Body of pancreas (tissue), 4 donors: ENCODE measurements at regions of chr6 and their contacts with region 1.

Region 1: DNA sequence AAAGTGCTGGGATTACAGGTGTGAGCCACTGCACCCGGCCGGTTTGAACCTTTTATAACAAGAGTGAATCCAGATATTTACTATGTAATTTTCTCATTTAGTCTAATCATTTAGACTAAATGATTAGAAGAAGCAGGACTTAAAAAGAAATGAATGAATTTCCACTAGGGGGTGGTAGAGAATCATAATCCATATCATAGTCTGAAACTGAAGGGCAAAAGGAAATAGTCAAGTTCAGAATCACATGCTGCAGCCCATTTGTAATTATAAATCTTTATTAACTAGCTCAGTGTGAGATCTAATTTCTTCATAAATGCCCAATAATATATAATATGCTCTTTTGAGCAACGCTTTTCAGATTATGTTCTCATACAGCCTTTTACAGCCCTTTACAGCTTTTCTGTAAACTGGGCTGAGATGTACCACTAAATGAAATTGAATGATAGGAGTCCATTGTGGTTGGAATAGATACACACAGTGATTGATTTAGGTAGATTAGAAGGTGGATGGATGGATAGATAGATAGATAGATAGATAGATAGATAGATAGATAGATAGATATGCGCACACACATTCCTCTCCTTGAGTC is 31.8 kb downstream of the PSMB9 start:
- DNase-seq: no peak
- ATAC-seq: peak; percentile 79
- H3K4me3 ChIP-seq: no peak overlapping the region
- H3K27ac ChIP-seq: no peak overlapping the region
- H3K4me1 ChIP-seq: peaks cover 9% of the 10 kb centered on the region
- H3K27me3 ChIP-seq: no peaks in the 10 kb centered on the region
- CTCF ChIP-seq: peak; percentile 28 to 88 (median 76)
- POLR2A ChIP-seq: no peak

Region 2: DNA sequence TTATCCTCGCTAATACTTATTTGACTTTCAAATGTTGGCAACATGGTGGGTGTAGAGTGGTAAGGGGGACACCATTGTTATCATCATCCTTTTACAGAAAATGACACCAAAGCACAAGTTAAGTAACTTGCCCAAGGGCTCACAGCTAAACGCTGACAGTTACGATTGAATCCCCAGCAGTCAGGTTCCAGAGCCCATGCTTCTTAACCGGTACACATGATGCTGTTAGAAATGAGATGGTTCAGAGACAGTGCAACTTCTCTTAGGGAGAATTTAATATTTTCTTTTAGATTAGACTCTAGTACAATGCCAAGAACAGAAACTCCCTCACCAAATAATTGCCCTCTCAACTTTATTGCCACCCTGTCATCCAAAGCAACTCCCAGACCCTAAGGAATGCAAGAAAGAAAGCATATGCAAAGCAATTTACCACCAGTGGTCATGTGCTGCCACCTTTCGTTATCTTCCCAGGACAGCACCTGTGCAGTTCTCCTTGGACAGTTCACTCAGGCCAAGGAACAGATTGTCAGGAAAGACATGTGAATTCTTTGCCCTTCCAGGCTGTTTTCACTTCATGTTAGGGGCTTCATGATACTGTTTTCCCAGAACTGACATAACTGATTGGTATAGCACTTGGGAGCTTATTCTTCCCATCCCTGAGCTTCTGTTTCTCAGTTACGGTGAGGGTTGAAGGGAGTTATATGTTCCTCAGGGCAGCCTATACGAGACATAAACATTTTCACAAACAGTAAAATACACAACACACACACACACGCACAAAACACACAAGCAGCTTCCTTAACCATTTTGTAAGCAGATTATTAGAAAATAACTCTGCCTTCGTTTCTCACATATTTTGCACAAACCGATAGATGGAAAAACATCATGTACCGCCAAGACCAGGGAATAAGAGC is 62.0 kb after region 1 on chr6:
- intact Hi-C with region 1: loop called (anchors 5 kb)
- DNase-seq: peak; percentile 61 to 76 (median 70)
- ATAC-seq: peak; percentile 80
- H3K4me3 ChIP-seq: no peak overlapping the region
- H3K27ac ChIP-seq: no peak overlapping the region
- H3K4me1 ChIP-seq: peaks cover 4% of the 10 kb centered on the region
- H3K27me3 ChIP-seq: no peaks in the 10 kb centered on the region
- CTCF ChIP-seq: peak; percentile 59 to 91 (median 83)
- POLR2A ChIP-seq: no peak

Region 3: GRCh38 chr6:32984605-32985389 is 99.0 kb after region 1 on chr6:
- intact Hi-C with region 1: loop called (anchors 10 kb)
- DNase-seq: peak; percentile 96 to 98 (median 97)
- ATAC-seq: peak; percentile 93
- H3K4me3 ChIP-seq: no peak overlapping the region
- H3K27ac ChIP-seq: peak overlapping the region in 2 of 4 donors; percentile 39 to 53
- H3K4me1 ChIP-seq: peaks cover 43% of the 10 kb centered on the region
- H3K27me3 ChIP-seq: no peaks in the 10 kb centered on the region
- CTCF ChIP-seq: peak; percentile 79 to 96 (median 94)
- POLR2A ChIP-seq: peak in 2 of 3 donors; percentile 7 to 15

Region 4: DNA sequence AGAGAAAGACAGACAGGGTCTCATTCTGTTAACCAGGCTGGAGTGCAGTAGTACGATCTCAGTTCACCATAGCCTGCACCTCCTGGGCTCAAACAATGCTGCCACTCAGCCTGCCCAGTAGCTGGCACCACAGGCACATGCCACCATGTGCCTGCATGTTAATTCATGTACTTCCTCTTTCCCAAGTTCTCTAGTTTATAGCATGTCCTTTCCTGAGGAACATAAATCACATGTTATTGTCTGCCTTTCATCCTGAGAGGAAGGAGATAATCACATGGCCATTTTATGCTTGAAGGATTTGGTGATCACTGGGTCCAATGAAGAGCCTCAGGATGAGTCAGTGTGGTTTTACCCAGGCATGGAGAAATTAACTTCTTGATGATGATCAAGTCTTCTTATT is 258.6 kb after region 1 on chr6:
- intact Hi-C with region 1: no loop called
- DNase-seq: peak in 2 of 4 donors; percentile 36 to 43
- ATAC-seq: peak; percentile 48
- H3K4me3 ChIP-seq: no peak overlapping the region
- H3K27ac ChIP-seq: no peak overlapping the region
- H3K4me1 ChIP-seq: no peaks in the 10 kb centered on the region
- H3K27me3 ChIP-seq: no peaks in the 10 kb centered on the region
- CTCF ChIP-seq: no peak
- POLR2A ChIP-seq: no peak